K562 (cell line): ENCODE measurements at regions of chr7 and their contacts with region 1.

Region 1: GRCh38 chr7:47179812-47180515 is 401.9 kb downstream of the TNS3 start:
- DNase-seq: peak; percentile 52 to 70 (median 59)
- ATAC-seq: peak; percentile 96
- H3K4me3 ChIP-seq: no peak overlapping the region
- H3K27ac ChIP-seq: no peak overlapping the region
- H3K4me1 ChIP-seq: no peaks in the 10 kb centered on the region; a peak in 1 of 5 replicates
- H3K27me3 ChIP-seq: peaks cover 0 to 12% of the 10 kb centered on the region in 2 experiments; a peak in 2 of 5 replicates
- CTCF ChIP-seq: peak; percentile 68 to 93 (median 69)
- EP300 ChIP-seq: no peak
- POLR2A ChIP-seq: no peak
- RAD21 ChIP-seq: peak; percentile 85 to 94

Region 2: GRCh38 chr7:45890902-45891461 is 1289.0 kb before region 1 on chr7:
- CTCF ChIA-PET with region 1: no interaction called
- POLR2A ChIA-PET with region 1: no interaction called
- in situ Hi-C with region 1: no loop called
- intact Hi-C with region 1: loop called (anchors 1 kb)
- DNase-seq: peak; percentile 20 to 38 (median 34)
- ATAC-seq: no peak
- H3K4me3 ChIP-seq: no peak overlapping the region
- H3K27ac ChIP-seq: no peak overlapping the region
- H3K4me1 ChIP-seq: peaks cover 0 to 6% of the 10 kb centered on the region in 2 experiments; a peak in 2 of 5 replicates
- H3K27me3 ChIP-seq: peaks cover 7 to 35% of the 10 kb centered on the region in 2 experiments; a peak in 4 of 5 replicates
- CTCF ChIP-seq: peak; percentile 22 to 66 (median 40); a peak in 4 of 6 replicates
- EP300 ChIP-seq: no peak
- POLR2A ChIP-seq: no peak
- RAD21 ChIP-seq: peak; percentile 68 to 73

Region 3: GRCh38 chr7:45917658-45918057 is 1262.3 kb before region 1 on chr7:
- CTCF ChIA-PET with region 1: interaction called, 6 read pairs
- POLR2A ChIA-PET with region 1: no interaction called
- in situ Hi-C with region 1: no loop called
- intact Hi-C with region 1: loop called (anchors 1 kb)
- DNase-seq: peak; percentile 70 to 82 (median 76)
- ATAC-seq: peak; percentile 95
- H3K4me3 ChIP-seq: no peak overlapping the region
- H3K27ac ChIP-seq: no peak overlapping the region
- H3K4me1 ChIP-seq: no peaks in the 10 kb centered on the region
- H3K27me3 ChIP-seq: peaks cover 0 to 4% of the 10 kb centered on the region in 2 experiments; a peak in 2 of 5 replicates
- CTCF ChIP-seq: peak; percentile 76 to 90 (median 80)
- EP300 ChIP-seq: no peak
- POLR2A ChIP-seq: no peak
- RAD21 ChIP-seq: peak; percentile 72 to 73

Region 4: GRCh38 chr7:45923290-45923689 is 1256.7 kb before region 1 on chr7:
- CTCF ChIA-PET with region 1: interaction called, 6 read pairs
- POLR2A ChIA-PET with region 1: no interaction called
- in situ Hi-C with region 1: no loop called
- intact Hi-C with region 1: loop called (anchors 1 kb)
- DNase-seq: peak; percentile 48 to 66 (median 48)
- ATAC-seq: peak; percentile 89
- H3K4me3 ChIP-seq: no peak overlapping the region
- H3K27ac ChIP-seq: no peak overlapping the region
- H3K4me1 ChIP-seq: no peaks in the 10 kb centered on the region
- H3K27me3 ChIP-seq: peaks cover 0 to 4% of the 10 kb centered on the region in 2 experiments; a peak in 2 of 5 replicates
- CTCF ChIP-seq: peak; percentile 73 to 85 (median 76)
- EP300 ChIP-seq: no peak
- POLR2A ChIP-seq: no peak
- RAD21 ChIP-seq: peak; percentile 75 to 76

Region 5: DNA sequence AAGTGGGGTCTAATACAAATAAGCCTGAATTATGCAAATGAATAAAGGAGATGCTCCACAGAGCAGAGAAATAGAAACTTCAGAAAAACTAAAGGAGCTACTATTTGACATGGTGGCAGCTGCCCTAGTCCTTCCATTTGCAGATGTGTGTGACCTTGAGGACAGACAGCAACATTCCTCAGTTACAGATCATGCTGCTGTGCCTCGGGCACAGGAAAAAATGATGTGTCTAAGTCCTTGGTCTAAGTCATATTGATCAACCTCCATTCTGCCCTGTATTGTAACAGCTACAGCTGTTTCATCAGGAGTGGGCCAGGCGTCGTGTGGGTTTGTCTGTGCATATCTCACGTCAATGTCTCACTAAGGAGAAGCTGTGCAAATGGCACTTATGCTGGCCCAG is 308.4 kb before region 1 on chr7:
- CTCF ChIA-PET with region 1: no interaction called
- POLR2A ChIA-PET with region 1: no interaction called
- in situ Hi-C with region 1: no loop called
- intact Hi-C with region 1: no loop called
- DNase-seq: no peak
- ATAC-seq: no peak
- H3K4me3 ChIP-seq: no peak overlapping the region
- H3K27ac ChIP-seq: no peak overlapping the region
- H3K4me1 ChIP-seq: no peaks in the 10 kb centered on the region
- H3K27me3 ChIP-seq: no peaks in the 10 kb centered on the region
- CTCF ChIP-seq: no peak
- EP300 ChIP-seq: no peak
- POLR2A ChIP-seq: no peak
- RAD21 ChIP-seq: no peak

Region 6: GRCh38 chr7:47100817-47101435 is 79.0 kb before region 1 on chr7:
- CTCF ChIA-PET with region 1: no interaction called
- POLR2A ChIA-PET with region 1: no interaction called
- in situ Hi-C with region 1: no loop called
- intact Hi-C with region 1: loop called (anchors 2 kb)
- DNase-seq: peak; percentile 34 to 64 (median 42)
- ATAC-seq: peak; percentile 92
- H3K4me3 ChIP-seq: no peak overlapping the region
- H3K27ac ChIP-seq: no peak overlapping the region
- H3K4me1 ChIP-seq: no peaks in the 10 kb centered on the region
- H3K27me3 ChIP-seq: no peaks in the 10 kb centered on the region; a peak in 1 of 5 replicates
- CTCF ChIP-seq: peak; percentile 62 to 73 (median 64)
- EP300 ChIP-seq: no peak
- POLR2A ChIP-seq: no peak
- RAD21 ChIP-seq: peak in 1 of 2 experiments; percentile 43; a peak in 1 of 4 replicates

Region 7: DNA sequence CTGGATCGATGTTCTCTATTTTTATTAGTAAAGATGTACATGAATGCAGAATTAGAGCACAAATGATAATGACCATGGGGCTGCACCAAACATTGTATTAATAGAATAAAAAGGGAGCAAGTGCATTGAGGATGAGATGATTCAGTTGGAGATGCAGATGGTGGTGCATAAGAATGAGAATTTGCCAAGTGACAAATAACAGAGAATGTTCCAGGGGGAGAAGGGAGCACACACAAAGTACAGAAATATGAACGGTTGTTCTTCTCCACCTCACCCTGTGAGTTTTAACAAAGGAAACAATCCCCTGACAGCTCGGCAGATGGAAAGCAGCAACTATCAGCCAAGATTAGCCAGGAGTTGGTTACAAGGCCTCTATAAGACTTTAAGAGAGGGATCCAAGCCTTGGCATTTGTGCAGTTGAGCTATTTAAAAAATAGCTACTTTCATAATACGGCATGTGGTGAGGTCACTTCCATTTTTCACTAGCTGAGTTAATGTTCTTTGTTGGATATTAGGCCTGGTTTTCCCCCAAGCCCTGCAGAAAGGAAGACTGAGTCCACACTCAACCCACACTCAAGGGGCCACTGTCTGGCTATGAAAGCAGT is 60.6 kb before region 1 on chr7:
- CTCF ChIA-PET with region 1: no interaction called
- POLR2A ChIA-PET with region 1: no interaction called
- in situ Hi-C with region 1: no loop called
- intact Hi-C with region 1: no loop called
- DNase-seq: no peak
- ATAC-seq: no peak
- H3K4me3 ChIP-seq: no peak overlapping the region
- H3K27ac ChIP-seq: no peak overlapping the region
- H3K4me1 ChIP-seq: no peaks in the 10 kb centered on the region
- H3K27me3 ChIP-seq: no peaks in the 10 kb centered on the region; a peak in 1 of 5 replicates
- CTCF ChIP-seq: no peak
- EP300 ChIP-seq: no peak
- POLR2A ChIP-seq: no peak
- RAD21 ChIP-seq: no peak

Region 8: DNA sequence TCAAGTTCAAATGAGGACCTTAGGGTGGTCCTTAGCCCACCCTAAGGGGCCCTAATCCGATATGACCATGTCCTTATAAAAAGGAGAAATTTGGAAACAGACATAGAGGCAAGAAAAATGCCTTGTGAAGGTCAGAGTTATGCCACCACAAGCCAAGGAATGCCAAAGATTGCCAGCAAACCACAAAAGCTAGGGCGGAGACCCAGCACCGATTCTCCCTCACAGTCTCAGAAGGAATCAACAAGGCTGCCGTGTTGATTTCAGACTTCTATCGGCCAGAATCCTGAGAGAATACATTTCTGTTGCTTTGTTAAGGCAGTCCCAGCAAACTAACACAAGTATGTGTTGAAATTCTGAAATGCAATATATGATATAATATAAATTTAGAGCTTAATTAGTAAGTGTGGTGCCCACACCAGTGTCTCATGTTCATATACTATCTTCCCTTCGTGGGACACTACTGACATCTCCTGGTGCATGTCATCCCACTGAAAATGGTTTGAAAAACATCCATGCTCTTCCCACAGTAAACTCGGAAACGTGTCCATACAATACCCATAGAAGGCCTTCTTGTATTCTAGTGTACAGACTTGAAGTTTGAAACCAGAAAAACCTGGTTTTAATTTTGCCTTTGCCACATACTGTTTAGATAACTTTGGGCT is 52.9 kb after region 1 on chr7:
- CTCF ChIA-PET with region 1: no interaction called
- POLR2A ChIA-PET with region 1: no interaction called
- in situ Hi-C with region 1: loop called (anchors 5 kb)
- intact Hi-C with region 1: loop called (anchors 1 kb)
- DNase-seq: peak in 2 of 4 experiments; percentile 35 to 50
- ATAC-seq: peak; percentile 60; the same call in 2 of the 3 replicates
- H3K4me3 ChIP-seq: no peak overlapping the region
- H3K27ac ChIP-seq: no peak overlapping the region
- H3K4me1 ChIP-seq: peaks cover 7% of the 10 kb centered on the region in 2 experiments; a peak in 4 of 5 replicates
- H3K27me3 ChIP-seq: no peaks in the 10 kb centered on the region
- CTCF ChIP-seq: peak; percentile 34 to 75 (median 64)
- EP300 ChIP-seq: no peak
- POLR2A ChIP-seq: no peak
- RAD21 ChIP-seq: peak; percentile 85 to 87

Region 9: GRCh38 chr7:47254081-47255006 is 74.4 kb after region 1 on chr7:
- CTCF ChIA-PET with region 1: no interaction called
- POLR2A ChIA-PET with region 1: no interaction called
- in situ Hi-C with region 1: no loop called
- intact Hi-C with region 1: loop called (anchors 1 kb)
- DNase-seq: peak; percentile 69 to 91 (median 88)
- ATAC-seq: peak; percentile 98
- H3K4me3 ChIP-seq: peak overlapping the region; percentile 57
- H3K27ac ChIP-seq: no peak overlapping the region
- H3K4me1 ChIP-seq: peaks cover 7 to 10% of the 10 kb centered on the region in 2 experiments; a peak in 3 of 5 replicates
- H3K27me3 ChIP-seq: peaks cover 0 to 12% of the 10 kb centered on the region in 2 experiments; a peak in 3 of 5 replicates
- CTCF ChIP-seq: peak; percentile 67 to 94 (median 73)
- EP300 ChIP-seq: no peak
- POLR2A ChIP-seq: no peak
- RAD21 ChIP-seq: peak; percentile 79 to 86